AG04449 (cell line): ENCODE measurements at regions of chr3 and their contacts with region 1.

Region 1: GRCh38 chr3:119676771-119677640 is at the start of gene COX17:
- DNase-seq: peak; percentile 71
- H3K4me3 ChIP-seq: peak within 1 kb of the TSS; percentile 74
- CTCF ChIP-seq: no peak

Region 2: DNA sequence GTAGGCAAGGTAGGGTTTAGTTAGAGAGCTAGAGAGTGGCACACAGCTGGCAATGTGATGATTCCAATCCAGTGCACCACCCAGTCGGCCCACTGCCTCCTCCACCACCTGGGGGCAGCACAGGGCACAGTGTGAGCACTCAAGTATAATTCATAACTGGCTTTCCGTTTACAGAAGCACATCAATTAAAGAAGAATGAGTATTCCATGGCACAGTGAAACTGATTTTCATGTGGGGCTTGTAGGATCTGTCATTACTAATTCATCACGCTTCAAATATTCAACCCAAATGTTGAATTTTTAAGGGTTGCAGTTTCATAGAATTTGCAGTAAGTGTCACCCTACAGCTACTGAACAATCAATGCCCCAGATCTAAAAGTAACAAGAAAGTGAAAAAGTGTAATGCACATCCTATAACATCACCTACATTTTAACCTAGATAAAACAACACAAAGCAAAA is 792.2 kb before region 1 on chr3:
- CTCF ChIA-PET with region 1: interaction called, 27 read pairs
- POLR2A ChIA-PET with region 1: no interaction called
- DNase-seq: no peak
- H3K4me3 ChIP-seq: no peak overlapping the region
- CTCF ChIP-seq: peak; percentile 95

Region 3: GRCh38 chr3:119279101-119279554 is 397.9 kb before region 1 on chr3:
- CTCF ChIA-PET with region 1: interaction called, 21 read pairs
- POLR2A ChIA-PET with region 1: no interaction called
- DNase-seq: no peak
- H3K4me3 ChIP-seq: no peak overlapping the region
- CTCF ChIP-seq: no peak

Region 4: GRCh38 chr3:119463171-119464169 is 213.5 kb before region 1 on chr3 and contains the start of gene TMEM39A:
- CTCF ChIA-PET with region 1: interaction called, 38 read pairs
- POLR2A ChIA-PET with region 1: interaction called, 3 read pairs
- DNase-seq: peak; percentile 89
- H3K4me3 ChIP-seq: peak within 1 kb of the TSS; percentile 94
- CTCF ChIP-seq: no peak

Region 5: DNA sequence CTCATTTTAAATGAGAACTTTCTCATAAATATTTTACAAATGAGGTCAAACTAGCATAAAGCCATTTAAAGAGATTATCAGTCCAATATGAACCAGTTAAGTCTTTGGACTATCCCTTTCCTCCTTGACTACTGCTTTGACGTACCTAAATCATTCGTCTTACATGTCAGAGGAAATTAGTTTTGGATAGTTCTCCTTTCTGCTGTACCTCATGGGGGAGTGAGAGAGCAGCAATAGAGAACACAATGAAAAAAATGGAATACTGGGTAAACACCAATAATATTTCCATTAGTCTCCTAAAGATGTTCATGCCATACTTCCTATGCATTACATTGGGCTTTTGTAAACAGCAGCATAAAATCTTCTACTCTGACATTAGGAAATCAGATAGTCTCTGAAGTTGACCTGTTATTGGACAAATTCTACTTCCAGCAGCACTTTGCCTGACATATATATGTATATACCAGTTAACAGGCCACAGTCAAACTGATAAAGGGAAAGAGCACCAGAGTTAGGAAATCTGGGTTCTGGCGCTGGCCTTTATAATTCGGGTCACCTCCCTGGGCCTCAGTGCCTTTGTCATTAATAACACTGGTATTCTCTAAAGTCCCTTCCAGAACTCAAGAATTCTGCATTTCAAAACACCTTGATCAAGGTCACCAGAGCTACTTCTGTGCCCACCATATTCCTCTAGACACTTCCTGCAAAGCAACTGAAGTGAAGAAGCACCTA is 151.9 kb before region 1 on chr3:
- CTCF ChIA-PET with region 1: interaction called, 37 read pairs
- POLR2A ChIA-PET with region 1: interaction called, 3 read pairs
- DNase-seq: no peak
- H3K4me3 ChIP-seq: no peak overlapping the region
- CTCF ChIP-seq: peak; percentile 46

Region 6: GRCh38 chr3:119695480-119695879 is 18.5 kb after region 1 on chr3:
- CTCF ChIA-PET with region 1: interaction called, 20 read pairs
- POLR2A ChIA-PET with region 1: no interaction called
- DNase-seq: no peak
- H3K4me3 ChIP-seq: no peak overlapping the region
- CTCF ChIP-seq: no peak

Region 7: DNA sequence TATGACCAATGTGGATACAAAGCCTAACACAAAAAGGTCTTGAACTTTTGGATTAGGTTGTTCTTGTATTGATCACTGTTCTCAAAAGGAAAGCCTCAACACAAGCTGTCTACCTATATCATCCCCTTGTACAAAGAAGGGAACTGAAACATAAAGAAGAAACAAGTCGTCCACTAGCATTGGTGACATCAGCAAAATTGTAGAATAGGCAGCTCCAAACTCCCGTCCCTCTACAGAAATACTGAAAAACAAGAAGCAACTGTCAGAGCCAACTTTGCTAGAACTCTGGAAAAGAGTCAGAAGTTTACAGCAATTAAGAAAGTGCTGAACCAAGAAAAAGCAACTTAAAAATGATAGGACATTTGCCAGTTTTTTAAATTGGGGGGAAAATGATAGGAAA is 97.4 kb after region 1 on chr3:
- CTCF ChIA-PET with region 1: no interaction called
- POLR2A ChIA-PET with region 1: no interaction called
- DNase-seq: no peak
- H3K4me3 ChIP-seq: no peak overlapping the region
- CTCF ChIP-seq: no peak